Activated T-helper 2 cell treated with anti-CD3 and anti-CD28 coated beads, Interferon-gamma antibody, Interleukin-2, Interleukin-4, amounts not matched to agents 10 μg/mL and 5 μg/mL and 100 μg/mL, durations not matched to agents 14 hours and 24 hours and 36 hours (primary cell): ENCODE measurements at regions of chr5 and their contacts with region 1.

Region 1: DNA sequence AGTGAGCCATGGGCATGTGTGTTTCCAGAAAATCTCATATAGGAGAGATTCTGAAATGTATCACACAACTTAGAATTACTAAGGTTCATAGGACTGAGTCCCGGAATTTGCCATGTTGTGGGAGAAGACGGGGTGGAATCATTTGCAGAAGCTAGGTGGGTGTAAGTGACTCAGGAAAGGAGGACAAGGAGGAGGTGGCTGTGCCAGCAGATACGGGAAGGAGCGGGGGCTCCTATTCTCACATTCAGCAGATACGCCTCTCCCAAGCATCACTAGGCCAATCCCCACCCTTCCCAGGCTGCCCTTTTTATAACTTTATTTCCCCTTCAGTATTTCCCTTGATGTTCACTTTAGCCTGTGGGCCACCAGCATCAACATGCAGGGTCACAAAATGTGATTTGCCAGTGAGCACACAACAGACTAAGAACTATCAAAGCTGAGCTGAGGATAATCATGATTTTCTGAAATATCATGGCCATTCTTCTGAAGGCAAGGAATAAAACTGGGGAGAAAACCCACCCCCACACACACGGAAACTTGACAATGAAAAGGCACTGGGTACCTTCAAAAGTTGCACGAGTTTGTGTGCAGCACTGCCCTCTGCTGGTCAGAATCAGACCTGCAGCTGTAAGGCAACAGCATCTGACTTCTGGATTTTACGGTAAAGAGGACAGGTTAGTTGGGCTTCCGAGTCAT is 133.2 kb downstream of the MTX3 start:
- DNase-seq: peak; percentile 58
- H3K4me3 Mint-ChIP-seq: no peak overlapping the region
- H3K27ac Mint-ChIP-seq: no peak overlapping the region
- H3K4me1 Mint-ChIP-seq: peaks cover 3% of the 10 kb centered on the region
- H3K27me3 Mint-ChIP-seq: peaks cover 21% of the 10 kb centered on the region

Region 2: GRCh38 chr5:79702606-79703382 is 155.1 kb before region 1 on chr5:
- intact Hi-C with region 1: loop called (anchors 1 kb)
- DNase-seq: peak; percentile 16
- H3K4me3 Mint-ChIP-seq: no peak overlapping the region
- H3K27ac Mint-ChIP-seq: no peak overlapping the region
- H3K4me1 Mint-ChIP-seq: peaks cover 22% of the 10 kb centered on the region
- H3K27me3 Mint-ChIP-seq: no peaks in the 10 kb centered on the region

Region 3: DNA sequence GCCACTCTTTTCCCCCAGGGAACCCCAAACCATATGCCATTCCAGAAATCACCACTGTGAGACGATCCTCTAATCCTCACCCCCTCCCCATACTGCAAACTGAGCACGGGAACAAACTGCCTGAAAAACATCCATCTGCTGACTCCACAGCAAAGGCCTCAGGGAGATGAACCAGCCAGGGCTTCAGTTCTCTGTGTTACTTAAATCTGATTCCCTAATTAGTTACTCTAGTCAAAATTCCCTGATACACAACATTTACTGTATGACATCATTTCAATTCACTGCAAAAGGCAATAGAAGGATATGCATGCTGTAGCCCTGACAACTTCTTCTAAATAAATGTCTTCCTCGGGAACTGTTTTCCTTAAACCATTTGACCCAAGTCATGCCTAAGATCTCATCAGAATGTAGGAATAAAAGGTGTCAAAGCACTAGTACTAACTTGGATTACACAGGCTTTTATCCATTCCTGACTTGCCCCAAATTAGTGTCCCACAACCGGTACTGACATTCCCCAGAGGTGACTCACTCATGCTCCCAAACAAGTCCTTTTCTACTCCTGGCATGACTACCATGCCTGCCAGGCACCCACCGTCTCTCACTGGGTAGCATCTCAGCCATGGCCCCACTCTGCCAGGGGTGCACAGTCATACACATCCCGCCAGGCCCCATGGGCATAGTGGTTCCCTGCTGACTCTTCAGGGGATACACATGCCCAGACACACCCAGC is 98.2 kb after region 1 on chr5:
- intact Hi-C with region 1: no loop called
- DNase-seq: no peak
- H3K4me3 Mint-ChIP-seq: no peak overlapping the region
- H3K27ac Mint-ChIP-seq: no peak overlapping the region
- H3K4me1 Mint-ChIP-seq: no peaks in the 10 kb centered on the region
- H3K27me3 Mint-ChIP-seq: peaks cover 3% of the 10 kb centered on the region